ENCODE measurements at regions of chr9 and their contacts with region 1.

Region 1: DNA sequence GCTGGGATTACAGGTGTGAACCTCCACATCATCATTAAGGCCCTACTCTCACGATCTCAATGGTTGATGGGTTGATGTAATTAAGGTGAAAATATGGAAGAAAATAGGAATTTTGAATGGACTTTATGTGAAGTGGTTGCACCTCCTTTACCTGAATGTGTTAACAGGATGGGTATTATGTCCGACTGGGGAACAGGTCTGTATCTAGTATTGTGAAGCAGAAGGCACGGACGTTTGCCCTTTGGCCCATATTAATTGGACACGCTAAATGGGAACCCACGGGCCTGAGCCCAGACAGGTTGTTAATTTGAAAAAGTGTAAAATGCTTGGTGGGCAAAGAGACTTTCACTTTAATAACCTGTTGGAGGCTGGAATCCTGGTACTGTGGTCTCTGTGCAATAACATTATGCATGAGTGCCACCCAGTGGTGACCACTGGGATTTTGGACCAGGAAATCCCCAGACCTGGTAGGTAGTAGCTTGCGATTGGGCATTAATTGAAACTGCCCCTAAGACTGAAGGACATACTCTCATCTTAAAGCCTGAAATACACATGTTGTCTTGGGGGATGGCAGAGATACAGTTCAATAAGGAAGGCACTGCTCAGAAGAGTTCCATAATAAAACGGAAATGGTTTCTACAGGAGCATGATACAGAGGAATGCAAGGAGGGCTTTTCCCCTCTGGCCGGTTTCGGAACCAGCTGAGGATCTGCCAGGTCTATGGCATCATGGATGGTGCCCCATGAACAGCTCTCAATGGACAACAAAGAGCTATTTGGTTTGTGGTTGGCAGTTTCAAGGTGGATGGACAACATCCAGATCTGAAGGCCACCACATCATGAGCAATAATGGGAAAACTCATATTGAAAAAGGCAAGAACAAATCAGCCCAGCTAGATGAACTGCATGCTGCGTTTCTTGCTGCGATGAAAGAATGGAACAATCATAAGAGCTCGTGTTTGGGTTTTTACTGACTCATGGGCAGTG is 26.2 kb upstream of the BICD2 start:
- DNase-seq: peak; percentile 59 to 83 (median 68)
- ATAC-seq: peak; percentile 97
- H3K4me3 ChIP-seq: no peak overlapping the region
- H3K27ac ChIP-seq: no peak overlapping the region
- H3K4me1 ChIP-seq: no peaks in the 10 kb centered on the region
- H3K27me3 ChIP-seq: peaks cover 7 to 45% of the 10 kb centered on the region in 2 experiments; a peak in 4 of 5 replicates
- CTCF ChIP-seq: peak; percentile 83 to 91 (median 84)
- EP300 ChIP-seq: no peak
- POLR2A ChIP-seq: no peak
- RAD21 ChIP-seq: peak; percentile 84 to 94

Region 2: DNA sequence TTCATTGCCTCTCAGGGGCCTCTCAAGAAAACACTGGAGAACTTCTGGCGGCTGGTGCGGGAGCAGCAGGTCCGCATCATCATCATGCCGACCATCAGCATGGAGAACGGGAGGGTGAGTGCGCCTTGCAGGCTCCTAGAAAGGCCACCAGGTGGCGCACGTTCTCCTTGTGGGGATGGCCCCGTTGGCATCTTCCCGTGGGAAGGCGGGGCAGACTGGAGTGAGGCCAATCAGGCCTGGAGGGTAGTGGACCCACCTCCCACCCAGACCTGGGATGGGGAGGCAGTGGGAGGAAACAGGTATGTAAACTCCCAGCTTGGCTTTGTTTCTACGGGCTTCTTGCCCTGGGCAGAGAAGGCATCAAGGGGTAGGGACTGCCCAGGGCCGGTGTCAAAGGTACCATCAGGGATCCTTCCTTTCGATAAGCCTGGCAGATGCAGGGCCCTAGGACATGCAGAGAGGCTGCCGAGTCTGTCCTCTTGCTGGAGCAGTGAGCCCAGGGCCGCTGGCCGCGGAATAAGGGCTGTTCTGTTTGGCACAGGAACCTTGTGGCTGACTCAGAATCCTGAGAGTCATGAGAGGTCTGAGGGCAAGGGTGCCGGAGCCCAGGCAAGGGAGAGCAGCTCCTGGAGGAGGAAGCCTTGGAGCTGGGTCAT is 656.8 kb before region 1 on chr9:
- CTCF ChIA-PET with region 1: no interaction called
- POLR2A ChIA-PET with region 1: no interaction called
- in situ Hi-C with region 1: loop called (anchors 10 kb)
- intact Hi-C with region 1: loop called (anchors 2 kb)
- DNase-seq: peak; percentile 83 to 87 (median 86)
- ATAC-seq: peak; percentile 84
- H3K4me3 ChIP-seq: no peak overlapping the region
- H3K27ac ChIP-seq: no peak overlapping the region
- H3K4me1 ChIP-seq: peaks cover 0 to 24% of the 10 kb centered on the region in 2 experiments; a peak in 4 of 5 replicates
- H3K27me3 ChIP-seq: peaks cover 0 to 10% of the 10 kb centered on the region in 2 experiments; a peak in 1 of 5 replicates
- CTCF ChIP-seq: peak; percentile 91 to 95 (median 91)
- EP300 ChIP-seq: no peak
- POLR2A ChIP-seq: no peak
- RAD21 ChIP-seq: peak; percentile 60 to 88

Region 3: DNA sequence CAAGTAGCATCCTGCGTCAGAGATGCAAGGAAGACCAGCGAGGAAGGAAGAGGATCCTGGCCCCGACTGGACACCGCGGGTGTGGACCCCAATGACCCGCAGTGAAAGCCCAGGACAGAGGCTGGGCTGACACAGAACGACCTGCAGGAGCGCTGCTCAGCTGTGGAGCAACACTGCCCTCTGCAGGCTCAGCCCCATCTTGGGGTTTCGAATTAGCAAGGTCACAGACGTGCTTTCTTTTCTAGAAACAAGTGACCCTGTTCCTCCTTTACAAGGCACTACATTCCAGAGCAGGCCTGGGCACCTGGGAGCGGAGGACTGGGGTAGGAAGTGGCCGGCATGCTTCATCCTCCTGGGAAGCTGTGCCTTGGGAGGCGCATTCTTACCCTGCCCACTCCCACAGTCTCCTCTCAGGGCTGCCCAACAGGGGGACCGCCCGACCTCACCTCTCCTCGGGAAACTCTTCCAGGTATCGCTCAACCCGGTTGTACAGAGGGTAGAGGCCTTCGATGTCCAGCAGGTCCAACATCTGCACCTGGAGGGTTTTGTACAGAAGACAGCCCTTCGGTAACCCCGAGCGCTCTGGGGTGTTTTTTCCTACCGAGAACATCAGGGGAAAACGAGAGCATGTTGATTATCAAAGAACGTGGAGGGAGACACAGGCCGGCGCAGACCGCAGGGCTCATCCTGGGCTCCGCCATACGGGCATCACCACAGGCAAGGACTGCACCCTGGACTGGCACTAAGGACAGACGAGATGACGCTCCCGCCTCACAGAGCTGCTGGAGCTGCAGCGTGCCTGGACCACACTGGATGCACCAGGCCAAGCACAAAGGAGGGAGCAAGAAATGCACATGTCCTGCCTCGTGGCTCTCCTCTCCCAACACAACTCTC is 155.9 kb before region 1 on chr9:
- CTCF ChIA-PET with region 1: no interaction called
- POLR2A ChIA-PET with region 1: no interaction called
- in situ Hi-C with region 1: no loop called
- intact Hi-C with region 1: loop called (anchors 10 kb)
- DNase-seq: peak; percentile 82 to 85 (median 83)
- ATAC-seq: peak; percentile 99
- H3K4me3 ChIP-seq: no peak overlapping the region
- H3K27ac ChIP-seq: no peak overlapping the region
- H3K4me1 ChIP-seq: peaks cover 0 to 5% of the 10 kb centered on the region in 2 experiments; a peak in 1 of 5 replicates
- H3K27me3 ChIP-seq: no peaks in the 10 kb centered on the region
- CTCF ChIP-seq: peak; percentile 98 to 100 (median 99)
- EP300 ChIP-seq: no peak
- POLR2A ChIP-seq: no peak
- RAD21 ChIP-seq: peak; percentile 87 to 94

Region 4: GRCh38 chr9:92716557-92716956 is 74.3 kb before region 1 on chr9:
- CTCF ChIA-PET with region 1: interaction called, 26 read pairs
- POLR2A ChIA-PET with region 1: no interaction called
- in situ Hi-C with region 1: loop called (anchors 10 kb)
- intact Hi-C with region 1: loop called (anchors 1 kb)
- DNase-seq: peak; percentile 70 to 82 (median 78)
- ATAC-seq: peak; percentile 95
- H3K4me3 ChIP-seq: no peak overlapping the region
- H3K27ac ChIP-seq: no peak overlapping the region
- H3K4me1 ChIP-seq: peaks cover 8 to 19% of the 10 kb centered on the region in 2 experiments
- H3K27me3 ChIP-seq: no peaks in the 10 kb centered on the region
- CTCF ChIP-seq: peak; percentile 77 to 89 (median 81)
- EP300 ChIP-seq: no peak
- POLR2A ChIP-seq: no peak
- RAD21 ChIP-seq: peak; percentile 57 to 86

Region 5: GRCh38 chr9:92728831-92729734 is 61.8 kb before region 1 on chr9:
- CTCF ChIA-PET with region 1: interaction called, 7 read pairs
- POLR2A ChIA-PET with region 1: no interaction called
- in situ Hi-C with region 1: loop called (anchors 5 kb)
- intact Hi-C with region 1: loop called (anchors 1 kb)
- DNase-seq: peak in 3 of 4 experiments; percentile 36 to 46 (median 44)
- ATAC-seq: peak; percentile 85
- H3K4me3 ChIP-seq: no peak overlapping the region
- H3K27ac ChIP-seq: no peak overlapping the region
- H3K4me1 ChIP-seq: peaks cover 0 to 5% of the 10 kb centered on the region in 2 experiments; a peak in 1 of 5 replicates
- H3K27me3 ChIP-seq: no peaks in the 10 kb centered on the region
- CTCF ChIP-seq: peak; percentile 46 to 61 (median 57)
- EP300 ChIP-seq: no peak
- POLR2A ChIP-seq: no peak
- RAD21 ChIP-seq: peak; percentile 27 to 69; a peak in 2 of 4 replicates

Region 6: GRCh38 chr9:92764988-92765936 is 25.6 kb before region 1 on chr9:
- CTCF ChIA-PET with region 1: interaction called, 4 read pairs
- POLR2A ChIA-PET with region 1: interaction called, 3 read pairs
- in situ Hi-C with region 1: no loop called
- intact Hi-C with region 1: loop called (anchors 1 kb)
- DNase-seq: peak; percentile 96 to 98 (median 97)
- ATAC-seq: peak; percentile 96
- H3K4me3 ChIP-seq: peak overlapping the region; percentile 98
- H3K27ac ChIP-seq: peak overlapping the region; percentile 100
- H3K4me1 ChIP-seq: peaks cover 34 to 35% of the 10 kb centered on the region in 2 experiments
- H3K27me3 ChIP-seq: no peaks in the 10 kb centered on the region
- CTCF ChIP-seq: peak; percentile 89 to 94 (median 93)
- EP300 ChIP-seq: no peak
- POLR2A ChIP-seq: peak; percentile 94
- RAD21 ChIP-seq: peak; percentile 54 to 64; a peak in 3 of 4 replicates

Region 7: DNA sequence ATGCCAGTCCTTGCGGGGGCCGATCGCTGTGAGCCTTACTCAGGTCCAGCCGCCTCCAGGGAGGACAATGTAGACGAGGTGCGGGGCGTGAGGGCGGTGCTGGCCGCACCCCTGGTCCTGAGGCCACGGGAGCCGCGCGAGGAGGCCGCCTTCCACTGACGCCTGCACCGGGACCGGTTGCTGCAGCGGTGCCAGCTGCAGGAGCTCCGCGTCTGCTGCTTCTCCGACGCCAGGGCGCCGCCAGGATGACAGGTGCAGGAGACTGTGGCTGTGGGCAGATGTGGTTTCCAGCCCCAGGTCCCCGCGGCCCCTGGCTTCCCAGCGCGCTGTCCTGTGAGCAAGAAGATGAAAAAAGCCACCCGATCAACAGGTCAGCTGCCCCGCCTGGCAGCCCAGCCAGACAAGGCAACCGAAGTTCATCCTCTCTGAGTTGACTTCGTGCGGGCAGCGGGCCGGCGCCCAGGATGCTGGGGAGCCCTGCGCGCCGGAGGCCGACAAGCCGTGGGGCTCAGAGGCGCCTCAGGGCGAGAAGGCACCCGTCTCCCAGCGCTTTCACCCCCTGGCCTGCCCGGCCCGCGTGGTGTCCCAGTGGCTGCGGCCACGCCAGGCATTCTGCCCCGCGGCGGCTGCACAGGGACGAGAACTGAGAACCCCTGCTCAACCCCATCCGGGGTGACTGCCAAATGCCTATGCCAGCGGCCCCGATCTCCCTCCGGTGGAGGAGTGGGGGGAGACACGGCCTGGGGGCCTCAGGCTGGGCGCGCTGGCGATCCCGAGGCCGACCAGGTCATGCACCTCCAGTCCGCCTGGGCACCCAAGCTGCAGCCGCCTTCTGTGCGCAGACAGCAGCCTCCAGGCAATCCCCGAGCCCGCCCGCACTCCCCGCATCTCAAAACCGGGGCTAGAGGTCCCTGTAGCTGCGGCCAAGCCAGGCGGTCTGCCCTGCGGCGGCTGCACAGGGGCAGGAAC is 17.2 kb after region 1 on chr9:
- CTCF ChIA-PET with region 1: no interaction called
- POLR2A ChIA-PET with region 1: no interaction called
- in situ Hi-C with region 1: no loop called
- intact Hi-C with region 1: loop called (anchors 2 kb)
- DNase-seq: no peak
- ATAC-seq: no peak; the same call in 2 of the 3 replicates
- H3K4me3 ChIP-seq: no peak overlapping the region
- H3K27ac ChIP-seq: no peak overlapping the region
- H3K4me1 ChIP-seq: peaks cover 0 to 30% of the 10 kb centered on the region in 2 experiments; a peak in 2 of 5 replicates
- H3K27me3 ChIP-seq: peaks cover 7 to 52% of the 10 kb centered on the region in 2 experiments; a peak in 3 of 5 replicates
- CTCF ChIP-seq: no peak
- EP300 ChIP-seq: no peak
- POLR2A ChIP-seq: no peak
- RAD21 ChIP-seq: no peak

Region 8: GRCh38 chr9:93028448-93029006 is 237.7 kb after region 1 on chr9:
- CTCF ChIA-PET with region 1: no interaction called
- POLR2A ChIA-PET with region 1: no interaction called
- in situ Hi-C with region 1: no loop called
- intact Hi-C with region 1: no loop called
- DNase-seq: no peak
- ATAC-seq: no peak
- H3K4me3 ChIP-seq: no peak overlapping the region
- H3K27ac ChIP-seq: no peak overlapping the region
- H3K4me1 ChIP-seq: peaks cover 0 to 4% of the 10 kb centered on the region in 2 experiments; a peak in 1 of 5 replicates
- H3K27me3 ChIP-seq: peaks cover 22 to 68% of the 10 kb centered on the region in 2 experiments; a peak in 4 of 5 replicates
- CTCF ChIP-seq: no peak
- EP300 ChIP-seq: no peak
- POLR2A ChIP-seq: no peak
- RAD21 ChIP-seq: no peak